Activated CD4-positive, alpha-beta memory T cell treated with anti-CD3 and anti-CD28 coated beads for 36 hours (primary cell): ENCODE measurements at regions of chr11 and their contacts with region 1.

Region 1: DNA sequence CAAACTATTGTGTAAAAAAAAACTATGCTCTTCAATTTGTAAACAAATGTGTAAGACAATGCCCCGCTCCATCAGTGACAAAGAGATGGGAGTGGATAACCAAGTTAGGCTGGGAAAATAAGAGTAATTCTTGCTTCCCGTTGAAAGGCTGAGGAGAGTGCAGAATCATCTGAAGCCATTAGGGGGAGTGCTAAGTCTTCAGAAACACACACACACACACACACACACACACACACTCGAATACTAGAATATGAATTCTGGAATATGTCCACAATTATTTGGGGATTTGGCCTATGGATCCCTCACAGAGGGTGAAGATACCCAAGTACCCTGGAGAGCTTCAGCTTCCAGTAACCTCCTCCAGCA is 27.8 kb upstream of the ROBO3 start:
- DNase-seq: no peak
- H3K4me3 Mint-ChIP-seq: no peak overlapping the region
- H3K27ac Mint-ChIP-seq: no peak overlapping the region
- H3K4me1 Mint-ChIP-seq: peaks cover 9% of the 10 kb centered on the region
- H3K27me3 Mint-ChIP-seq: peaks cover 49% of the 10 kb centered on the region

Region 2: DNA sequence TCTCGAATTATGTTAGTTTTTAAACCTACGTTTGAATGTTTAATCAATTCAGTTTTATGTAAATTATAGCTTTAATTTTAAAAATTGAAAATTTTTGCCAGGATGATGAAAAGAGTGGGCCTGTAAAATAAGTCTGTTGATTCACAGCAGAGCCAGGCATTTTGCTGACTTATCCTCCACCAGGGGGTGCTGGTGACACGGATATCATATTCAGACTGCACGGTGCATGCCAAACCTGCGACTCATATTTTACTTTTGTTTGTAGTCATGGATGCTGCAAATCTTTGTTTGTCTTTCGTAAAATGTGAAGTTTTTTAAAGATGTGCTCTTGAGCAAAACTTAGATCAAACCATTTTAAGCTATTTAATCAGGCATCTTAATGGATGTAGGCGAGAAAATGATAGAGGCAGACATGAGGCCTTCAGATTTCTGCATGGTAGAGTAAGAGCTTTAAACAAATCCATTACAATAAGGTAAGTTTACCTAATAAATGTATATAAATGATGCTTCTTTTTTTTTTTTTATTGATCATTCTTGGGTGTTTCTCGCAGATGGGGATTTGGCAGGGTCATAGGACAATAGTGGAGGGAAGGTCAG is 435.1 kb before region 1 on chr11:
- CTCF ChIA-PET with region 1: no interaction called
- POLR2A ChIA-PET with region 1: no interaction called
- intact Hi-C with region 1: loop called (anchors 10 kb)
- DNase-seq: peak; percentile 71
- H3K4me3 Mint-ChIP-seq: no peak overlapping the region
- H3K27ac Mint-ChIP-seq: no peak overlapping the region
- H3K4me1 Mint-ChIP-seq: peaks cover 2% of the 10 kb centered on the region
- H3K27me3 Mint-ChIP-seq: no peaks in the 10 kb centered on the region

Region 3: GRCh38 chr11:124644426-124645280 is 192.8 kb before region 1 on chr11:
- CTCF ChIA-PET with region 1: interaction called, 23 read pairs
- POLR2A ChIA-PET with region 1: no interaction called
- intact Hi-C with region 1: loop called (anchors 1 kb)
- DNase-seq: peak; percentile 38
- H3K4me3 Mint-ChIP-seq: no peak overlapping the region
- H3K27ac Mint-ChIP-seq: no peak overlapping the region
- H3K4me1 Mint-ChIP-seq: peaks cover 2% of the 10 kb centered on the region
- H3K27me3 Mint-ChIP-seq: no peaks in the 10 kb centered on the region

Region 4: GRCh38 chr11:124732230-124732629 is 105.2 kb before region 1 on chr11:
- CTCF ChIA-PET with region 1: no interaction called
- POLR2A ChIA-PET with region 1: no interaction called
- intact Hi-C with region 1: no loop called
- DNase-seq: no peak
- H3K4me3 Mint-ChIP-seq: no peak overlapping the region
- H3K27ac Mint-ChIP-seq: no peak overlapping the region
- H3K4me1 Mint-ChIP-seq: no peaks in the 10 kb centered on the region
- H3K27me3 Mint-ChIP-seq: no peaks in the 10 kb centered on the region

Region 5: DNA sequence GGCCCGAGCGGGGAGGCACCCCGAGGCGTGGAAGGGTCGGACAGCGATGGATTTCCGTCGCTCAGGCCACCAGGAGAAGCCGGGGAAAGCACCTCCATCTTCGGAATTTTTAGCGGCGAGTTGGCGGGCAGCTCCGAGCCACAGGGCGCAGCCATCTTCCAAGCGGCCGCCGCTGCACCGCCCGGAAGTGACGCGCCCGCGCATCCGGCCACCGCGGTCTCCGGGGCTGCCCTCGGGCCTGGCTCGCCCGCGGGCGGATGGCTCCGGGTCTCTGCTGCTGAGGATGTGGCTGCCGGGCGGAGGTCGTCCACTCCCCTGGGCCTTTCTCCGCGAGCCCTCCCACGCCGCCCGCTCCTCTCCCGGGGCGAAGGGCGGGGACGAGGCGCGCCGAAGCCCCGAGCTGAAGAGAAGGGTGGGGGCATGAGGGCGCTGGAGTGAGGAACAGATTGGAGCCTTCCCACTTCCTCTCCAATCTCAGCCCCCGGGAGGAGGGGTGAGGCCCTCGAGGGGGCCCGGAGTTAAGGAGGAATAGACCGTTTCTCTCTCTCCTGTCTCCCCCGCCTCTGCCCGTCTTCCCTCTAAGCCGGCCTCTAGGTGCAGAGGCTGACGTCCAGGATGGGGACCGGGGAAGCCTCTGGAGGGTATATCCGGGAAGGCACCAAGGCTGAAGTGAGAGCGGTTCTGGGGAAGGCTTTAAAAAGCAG is 37.1 kb before region 1 on chr11 and contains the start of gene MSANTD2:
- CTCF ChIA-PET with region 1: interaction called, 61 read pairs
- POLR2A ChIA-PET with region 1: interaction called, 5 read pairs
- intact Hi-C with region 1: loop called (anchors 1 kb)
- DNase-seq: peak; percentile 87
- H3K4me3 Mint-ChIP-seq: peak within 1 kb of the TSS; percentile 89
- H3K27ac Mint-ChIP-seq: peak within 1 kb of the TSS; percentile 94
- H3K4me1 Mint-ChIP-seq: peaks cover 29% of the 10 kb centered on the region
- H3K27me3 Mint-ChIP-seq: no peaks in the 10 kb centered on the region
- total RNA-seq, gene MSANTD2: 6.1 to 6.4 TPM

Region 6: DNA sequence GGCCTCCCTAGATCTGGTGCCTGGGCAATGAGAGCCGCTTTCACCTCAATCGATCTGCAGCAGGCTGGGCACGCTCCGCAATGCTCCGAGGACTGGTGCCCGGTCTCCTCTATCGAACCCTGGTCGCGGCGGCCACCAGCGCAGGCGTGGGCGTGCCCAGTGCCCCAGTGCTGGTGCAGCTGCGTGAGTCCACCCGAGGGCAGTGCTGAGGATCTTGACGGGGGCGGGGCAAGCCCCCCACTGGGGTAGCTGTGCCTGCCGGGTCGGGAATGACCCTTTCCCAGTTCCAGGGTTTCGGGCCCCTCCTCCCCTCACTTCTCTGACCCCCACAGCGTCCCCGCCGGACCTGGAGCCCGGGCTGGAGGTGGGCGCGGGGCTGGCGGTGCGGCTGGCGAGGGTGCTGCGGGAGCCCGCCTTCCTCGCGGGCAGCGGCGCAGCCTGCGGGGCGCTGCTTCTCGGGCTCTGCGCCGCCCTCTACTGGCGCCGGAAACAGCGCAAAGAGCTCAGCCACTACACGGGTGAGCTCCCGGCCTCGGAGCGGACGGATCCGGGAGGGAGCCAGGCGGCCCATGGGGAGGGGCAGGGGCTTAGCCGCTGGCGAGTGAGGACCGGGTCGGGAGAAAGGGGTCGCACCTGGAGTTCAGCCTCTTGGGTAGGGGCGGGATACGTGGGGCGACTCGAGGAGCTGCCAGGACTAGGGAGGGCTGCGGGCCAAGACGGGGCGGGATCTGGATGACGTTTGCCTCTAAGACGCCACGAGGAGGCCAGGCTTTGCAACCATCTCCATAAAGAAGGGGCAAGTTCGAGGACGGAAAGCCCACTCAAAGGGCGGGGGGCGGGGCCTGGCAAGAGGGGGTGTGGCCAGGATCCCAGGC is 38.7 kb after region 1 on chr11:
- CTCF ChIA-PET with region 1: interaction called, 11 read pairs
- POLR2A ChIA-PET with region 1: no interaction called
- intact Hi-C with region 1: loop called (anchors 2 kb)
- DNase-seq: peak; percentile 85
- H3K4me3 Mint-ChIP-seq: peak overlapping the region; percentile 77
- H3K27ac Mint-ChIP-seq: peak overlapping the region; percentile 61
- H3K4me1 Mint-ChIP-seq: peaks cover 13% of the 10 kb centered on the region
- H3K27me3 Mint-ChIP-seq: peaks cover 15% of the 10 kb centered on the region